ENCODE measurements at regions of chr9 and their contacts with region 1.

Region 1: DNA sequence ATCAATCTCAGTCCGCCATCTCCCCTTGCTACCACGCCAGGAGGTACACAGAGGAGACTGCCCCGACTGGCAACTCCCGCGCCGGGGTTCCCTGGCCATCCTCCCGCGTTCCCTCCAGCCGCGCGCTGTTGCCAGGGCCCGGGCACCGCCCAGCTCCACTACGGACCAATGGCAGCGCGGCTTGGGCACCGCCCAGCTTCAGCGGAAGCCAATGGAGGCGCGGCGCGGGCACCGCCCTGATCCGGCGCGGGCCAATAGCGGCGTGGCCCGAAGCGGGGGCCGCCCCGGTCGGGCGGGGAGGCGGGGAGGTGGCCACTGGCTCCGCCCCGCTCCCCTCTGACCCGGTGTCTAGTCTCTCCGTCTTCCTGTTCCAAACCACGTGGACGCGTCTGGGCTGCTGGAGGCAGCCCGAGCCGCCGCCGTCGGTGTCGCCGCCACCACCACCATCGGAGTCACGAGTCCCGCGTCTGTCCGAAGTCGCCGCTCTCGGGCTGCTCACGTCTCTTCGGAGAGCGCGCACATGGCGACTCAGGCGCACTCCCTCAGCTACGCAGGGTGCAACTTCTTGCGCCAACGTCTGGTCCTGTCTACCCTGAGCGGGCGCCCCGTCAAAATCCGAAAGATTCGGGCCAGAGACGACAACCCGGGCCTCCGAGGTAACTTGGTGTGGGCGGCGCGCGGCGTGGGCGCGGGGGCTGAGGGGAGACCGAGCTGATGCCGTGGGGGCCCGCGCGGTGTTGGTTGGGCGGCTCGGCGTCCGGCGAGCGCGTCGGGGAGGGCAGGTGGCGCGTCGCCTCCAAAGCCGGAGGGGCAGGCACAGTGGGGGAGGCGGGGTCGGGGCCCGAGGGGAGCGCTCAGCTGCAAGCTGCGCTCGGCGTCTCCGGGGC is at the start of gene RCL1:
- DNase-seq: peak; percentile 92
- ATAC-seq: peak; percentile 98
- H3K4me3 ChIP-seq: peak within 1 kb of the TSS; percentile 86
- H3K27ac ChIP-seq: peak within 1 kb of the TSS; percentile 65
- H3K4me1 ChIP-seq: peaks cover 3% of the 10 kb centered on the region; the same call in 1 of the 2 replicates
- H3K27me3 ChIP-seq: no peaks in the 10 kb centered on the region
- CTCF ChIP-seq: no peak
- POLR2A ChIP-seq: peak; percentile 81
- RAD21 ChIP-seq: no peak; the same call in 1 of the 2 replicates
- total RNA-seq, gene RCL1: 13.8 and 14.7 TPM in 2 replicates

Region 2: GRCh38 chr9:4689687-4690104 is 103.1 kb before region 1 on chr9:
- CTCF ChIA-PET with region 1: no interaction called
- POLR2A ChIA-PET with region 1: no interaction called
- dilution Hi-C with region 1: no loop called
- in situ Hi-C with region 1: no loop called
- intact Hi-C with region 1: no loop called
- DNase-seq: peak; percentile 31
- ATAC-seq: no peak
- H3K4me3 ChIP-seq: no peak overlapping the region
- H3K27ac ChIP-seq: no peak overlapping the region
- H3K4me1 ChIP-seq: peaks cover 2% of the 10 kb centered on the region
- H3K27me3 ChIP-seq: no peaks in the 10 kb centered on the region
- CTCF ChIP-seq: no peak
- POLR2A ChIP-seq: no peak
- RAD21 ChIP-seq: no peak

Region 3: GRCh38 chr9:4832786-4833579 is 40.2 kb after region 1 on chr9:
- CTCF ChIA-PET with region 1: interaction called, 4 read pairs
- POLR2A ChIA-PET with region 1: no interaction called
- dilution Hi-C with region 1: no loop called
- in situ Hi-C with region 1: no loop called
- intact Hi-C with region 1: loop called (anchors 5 kb)
- DNase-seq: peak; percentile 100
- ATAC-seq: peak; percentile 65
- H3K4me3 ChIP-seq: no peak overlapping the region
- H3K27ac ChIP-seq: peak overlapping the region; percentile 85
- H3K4me1 ChIP-seq: peaks cover 36% of the 10 kb centered on the region
- H3K27me3 ChIP-seq: no peaks in the 10 kb centered on the region
- CTCF ChIP-seq: no peak
- POLR2A ChIP-seq: peak; percentile 20; the same call in 1 of the 2 replicates
- RAD21 ChIP-seq: no peak

Region 4: GRCh38 chr9:4862506-4863250 is 69.9 kb after region 1 on chr9:
- CTCF ChIA-PET with region 1: no interaction called
- POLR2A ChIA-PET with region 1: no interaction called
- dilution Hi-C with region 1: no loop called
- in situ Hi-C with region 1: no loop called
- intact Hi-C with region 1: loop called (anchors 5 kb)
- DNase-seq: peak; percentile 51
- ATAC-seq: peak; percentile 59
- H3K4me3 ChIP-seq: no peak overlapping the region
- H3K27ac ChIP-seq: no peak overlapping the region
- H3K4me1 ChIP-seq: no peaks in the 10 kb centered on the region; the same call in 1 of the 2 replicates
- H3K27me3 ChIP-seq: no peaks in the 10 kb centered on the region
- CTCF ChIP-seq: no peak
- POLR2A ChIP-seq: no peak
- RAD21 ChIP-seq: no peak

Region 5: GRCh38 chr9:4923580-4924544 is 131.0 kb after region 1 on chr9:
- CTCF ChIA-PET with region 1: no interaction called
- POLR2A ChIA-PET with region 1: no interaction called
- dilution Hi-C with region 1: no loop called
- in situ Hi-C with region 1: no loop called
- intact Hi-C with region 1: loop called (anchors 10 kb)
- DNase-seq: peak; percentile 44
- ATAC-seq: peak; percentile 56
- H3K4me3 ChIP-seq: no peak overlapping the region
- H3K27ac ChIP-seq: no peak overlapping the region
- H3K4me1 ChIP-seq: no peaks in the 10 kb centered on the region
- H3K27me3 ChIP-seq: peaks cover 2% of the 10 kb centered on the region; the same call in 1 of the 2 replicates
- CTCF ChIP-seq: peak; percentile 61
- POLR2A ChIP-seq: no peak
- RAD21 ChIP-seq: peak; percentile 56

Measured in IMR-90 (cell line).